ENCODE measurements at regions of chr18 and their contacts with region 1.

Region 1: DNA sequence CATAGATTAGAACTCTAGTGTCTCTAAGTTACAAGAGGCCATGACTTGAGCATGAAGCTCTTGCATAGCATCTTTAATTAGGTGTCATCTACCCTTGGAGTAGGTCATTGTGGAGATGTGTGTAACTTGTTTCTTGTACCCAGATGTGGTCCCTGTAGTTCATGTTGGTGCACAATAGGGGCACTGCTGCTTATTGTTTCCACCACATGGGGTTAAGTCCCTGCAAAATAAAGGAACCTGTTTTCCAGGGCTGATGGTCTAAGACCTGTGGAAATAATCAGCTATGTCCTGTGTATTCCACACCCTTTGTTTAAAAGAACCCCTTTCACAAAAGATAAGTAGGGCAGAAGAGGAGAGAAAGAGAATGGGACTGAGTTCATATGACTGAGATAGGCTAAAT is 28.6 kb downstream of the ASXL3 start:
- DNase-seq: no peak
- ATAC-seq: no peak
- H3K4me3 ChIP-seq: no peak overlapping the region
- H3K4me3 Mint-ChIP-seq: no peak overlapping the region
- H3K27ac ChIP-seq: no peak overlapping the region
- H3K27ac Mint-ChIP-seq: no peak overlapping the region
- H3K4me1 ChIP-seq: no peaks in the 10 kb centered on the region
- H3K4me1 Mint-ChIP-seq: no peaks in the 10 kb centered on the region
- H3K27me3 ChIP-seq: no peaks in the 10 kb centered on the region
- H3K27me3 Mint-ChIP-seq: no peaks in the 10 kb centered on the region
- CTCF ChIP-seq: no peak

Region 2: DNA sequence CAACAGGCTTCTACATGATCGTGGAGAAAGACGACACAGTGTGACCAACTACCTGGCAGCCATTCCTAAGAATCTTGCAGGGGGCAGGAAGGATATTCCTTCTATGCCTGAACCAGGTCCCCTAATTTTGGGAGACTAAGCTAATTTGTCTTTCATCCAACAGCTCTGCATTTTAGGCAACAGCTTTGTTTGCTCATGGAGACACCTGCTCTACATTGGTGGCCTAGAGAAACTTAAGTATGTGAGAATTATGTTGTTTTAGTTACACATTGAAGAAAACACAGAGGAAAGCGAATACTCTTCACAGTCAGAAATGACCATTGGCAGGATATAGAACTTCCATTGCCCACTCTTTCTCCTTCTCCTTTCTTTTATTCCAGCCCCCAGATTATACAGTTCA is 46.6 kb after region 1 on chr18:
- CTCF ChIA-PET with region 1: no interaction called
- POLR2A ChIA-PET with region 1: no interaction called
- intact Hi-C with region 1: loop called in 1 of 2 experiments (anchors 5 kb)
- DNase-seq: no peak
- ATAC-seq: no peak
- H3K4me3 ChIP-seq: no peak overlapping the region
- H3K4me3 Mint-ChIP-seq: no peak overlapping the region
- H3K27ac ChIP-seq: no peak overlapping the region
- H3K27ac Mint-ChIP-seq: no peak overlapping the region
- H3K4me1 ChIP-seq: no peaks in the 10 kb centered on the region
- H3K4me1 Mint-ChIP-seq: no peaks in the 10 kb centered on the region
- H3K27me3 ChIP-seq: no peaks in the 10 kb centered on the region
- H3K27me3 Mint-ChIP-seq: no peaks in the 10 kb centered on the region
- CTCF ChIP-seq: no peak

Region 3: DNA sequence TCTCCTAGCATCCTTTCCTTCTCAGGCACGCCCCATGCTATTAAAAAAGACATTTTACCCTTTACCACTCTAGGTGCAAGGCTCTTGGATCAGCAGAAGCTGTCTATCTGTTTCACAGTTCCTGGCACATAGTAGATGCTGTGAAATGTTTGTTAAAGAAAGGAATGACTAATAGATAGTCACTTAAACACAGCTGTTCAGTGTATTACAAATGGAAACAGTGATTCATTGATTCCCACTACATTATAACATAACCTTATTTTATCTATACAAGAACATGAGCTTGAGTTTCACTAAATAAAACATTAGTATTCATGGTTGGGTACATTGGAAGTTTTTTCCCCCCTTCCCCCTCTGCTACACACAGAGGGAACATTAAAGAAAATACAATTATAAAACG is 113.5 kb after region 1 on chr18:
- CTCF ChIA-PET with region 1: no interaction called
- POLR2A ChIA-PET with region 1: no interaction called
- intact Hi-C with region 1: no loop called
- DNase-seq: no peak
- ATAC-seq: no peak
- H3K4me3 ChIP-seq: no peak overlapping the region
- H3K4me3 Mint-ChIP-seq: no peak overlapping the region
- H3K27ac ChIP-seq: no peak overlapping the region
- H3K27ac Mint-ChIP-seq: no peak overlapping the region
- H3K4me1 ChIP-seq: no peaks in the 10 kb centered on the region
- H3K4me1 Mint-ChIP-seq: no peaks in the 10 kb centered on the region
- H3K27me3 ChIP-seq: no peaks in the 10 kb centered on the region
- H3K27me3 Mint-ChIP-seq: no peaks in the 10 kb centered on the region
- CTCF ChIP-seq: no peak

Region 4: GRCh38 chr18:34023471-34023870 is 416.9 kb after region 1 on chr18:
- CTCF ChIA-PET with region 1: no interaction called
- POLR2A ChIA-PET with region 1: no interaction called
- intact Hi-C with region 1: no loop called
- DNase-seq: no peak
- ATAC-seq: no peak
- H3K4me3 ChIP-seq: no peak overlapping the region
- H3K4me3 Mint-ChIP-seq: no peak overlapping the region
- H3K27ac ChIP-seq: no peak overlapping the region
- H3K27ac Mint-ChIP-seq: no peak overlapping the region
- H3K4me1 ChIP-seq: no peaks in the 10 kb centered on the region
- H3K4me1 Mint-ChIP-seq: no peaks in the 10 kb centered on the region
- H3K27me3 ChIP-seq: no peaks in the 10 kb centered on the region
- H3K27me3 Mint-ChIP-seq: no peaks in the 10 kb centered on the region
- CTCF ChIP-seq: no peak

Region 5: GRCh38 chr18:34787931-34788532 is 1181.4 kb after region 1 on chr18:
- CTCF ChIA-PET with region 1: no interaction called
- POLR2A ChIA-PET with region 1: no interaction called
- intact Hi-C with region 1: loop called in 1 of 2 experiments (anchors 10 kb)
- DNase-seq: peak in 5 of 9 experiments; percentile 14 to 63 (median 32)
- ATAC-seq: peak; percentile 59
- H3K4me3 ChIP-seq: no peak overlapping the region
- H3K4me3 Mint-ChIP-seq: no peak overlapping the region
- H3K27ac ChIP-seq: no peak overlapping the region
- H3K27ac Mint-ChIP-seq: no peak overlapping the region
- H3K4me1 ChIP-seq: no peaks in the 10 kb centered on the region
- H3K4me1 Mint-ChIP-seq: peaks cover 6% of the 10 kb centered on the region
- H3K27me3 ChIP-seq: no peaks in the 10 kb centered on the region
- H3K27me3 Mint-ChIP-seq: peaks cover 16% of the 10 kb centered on the region
- CTCF ChIP-seq: peak; percentile 89

Measured in CD8-positive, alpha-beta T cell (primary cell).